ENCODE measurements at regions of chr21 and their contacts with region 1.

Region 1: DNA sequence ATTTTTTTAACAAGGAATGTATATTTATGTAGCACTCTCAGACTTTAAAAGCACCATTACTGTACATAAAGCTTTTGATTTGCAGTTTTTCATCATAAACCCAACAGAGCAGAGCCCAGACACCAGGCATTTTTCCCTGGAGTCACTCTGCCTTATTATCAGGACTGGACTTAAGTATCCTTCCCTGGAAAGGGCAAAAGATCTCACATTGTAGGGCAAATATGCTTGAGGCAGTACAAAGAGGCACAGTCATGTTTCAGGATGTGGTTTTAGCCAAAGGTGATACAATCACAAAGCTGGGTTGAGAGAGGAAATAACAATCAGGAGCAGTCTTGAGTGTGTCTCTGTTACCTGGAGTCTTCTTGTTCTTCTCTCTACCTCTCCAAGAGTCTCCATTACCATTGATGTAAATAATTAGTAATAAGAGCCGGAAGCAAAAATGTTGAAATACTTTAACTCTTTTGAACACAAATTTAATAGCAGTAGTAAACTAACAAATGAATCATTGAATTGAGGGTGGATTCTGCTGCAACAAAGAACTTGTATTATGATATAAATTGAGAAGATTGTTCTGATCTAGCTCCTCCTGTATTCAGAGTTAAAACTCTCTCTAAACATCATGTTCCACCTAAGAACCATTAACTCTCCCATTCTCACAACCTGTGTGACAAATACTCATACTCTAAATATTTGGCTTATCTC is 160.5 kb downstream of the LTN1 start:
- DNase-seq: peak; percentile 33
- H3K4me3 Mint-ChIP-seq: peak overlapping the region; percentile 70
- H3K27ac Mint-ChIP-seq: peak overlapping the region; percentile 88
- H3K4me1 Mint-ChIP-seq: peaks cover 74% of the 10 kb centered on the region
- H3K27me3 Mint-ChIP-seq: peaks cover 2% of the 10 kb centered on the region

Region 2: DNA sequence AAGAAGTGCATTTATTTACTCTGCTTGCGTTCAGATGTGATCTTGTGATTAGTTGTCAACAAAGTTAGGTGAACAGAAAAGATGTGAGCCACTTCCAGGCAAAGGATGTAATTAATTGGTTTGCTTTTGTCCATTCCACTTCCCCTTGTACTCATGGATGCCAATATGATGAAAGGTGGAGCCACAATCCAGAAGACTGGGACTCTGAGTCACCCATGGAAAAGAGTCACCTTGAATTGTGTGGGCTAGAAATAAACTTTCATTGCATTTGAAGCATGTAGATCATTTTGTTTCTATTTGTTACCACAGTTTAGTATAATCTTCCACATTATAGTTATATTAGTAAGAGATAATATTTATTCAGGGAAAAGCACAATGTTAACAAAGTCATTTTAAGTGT is 523.6 kb before region 1 on chr21:
- intact Hi-C with region 1: no loop called
- DNase-seq: no peak
- H3K4me3 Mint-ChIP-seq: no peak overlapping the region
- H3K27ac Mint-ChIP-seq: no peak overlapping the region
- H3K4me1 Mint-ChIP-seq: no peaks in the 10 kb centered on the region
- H3K27me3 Mint-ChIP-seq: no peaks in the 10 kb centered on the region

Region 3: DNA sequence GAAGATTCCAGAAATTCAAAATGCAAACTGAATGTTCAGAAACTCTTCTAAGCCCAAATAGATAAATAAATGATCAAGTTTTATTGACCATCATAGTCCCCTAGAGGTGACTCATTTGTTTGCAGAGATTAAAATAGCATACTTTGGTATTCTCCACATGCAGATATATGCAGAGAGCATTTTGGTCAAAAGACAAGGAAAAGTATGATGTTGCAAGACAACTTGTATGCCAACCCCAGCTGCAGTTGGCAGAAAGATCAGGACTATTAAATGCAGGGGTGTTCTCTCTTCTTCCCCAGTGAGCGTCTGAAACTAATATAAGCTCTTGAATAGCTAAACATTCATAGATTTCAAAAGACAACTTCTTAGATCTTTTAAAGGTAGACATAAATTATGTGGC is 244.4 kb before region 1 on chr21:
- intact Hi-C with region 1: no loop called
- DNase-seq: no peak
- H3K4me3 Mint-ChIP-seq: no peak overlapping the region
- H3K27ac Mint-ChIP-seq: no peak overlapping the region
- H3K4me1 Mint-ChIP-seq: no peaks in the 10 kb centered on the region
- H3K27me3 Mint-ChIP-seq: no peaks in the 10 kb centered on the region

Region 4: GRCh38 chr21:28781602-28782276 is 50.4 kb before region 1 on chr21:
- intact Hi-C with region 1: no loop called
- DNase-seq: no peak
- H3K4me3 Mint-ChIP-seq: no peak overlapping the region
- H3K27ac Mint-ChIP-seq: no peak overlapping the region
- H3K4me1 Mint-ChIP-seq: peaks cover 2% of the 10 kb centered on the region
- H3K27me3 Mint-ChIP-seq: no peaks in the 10 kb centered on the region

Region 5: DNA sequence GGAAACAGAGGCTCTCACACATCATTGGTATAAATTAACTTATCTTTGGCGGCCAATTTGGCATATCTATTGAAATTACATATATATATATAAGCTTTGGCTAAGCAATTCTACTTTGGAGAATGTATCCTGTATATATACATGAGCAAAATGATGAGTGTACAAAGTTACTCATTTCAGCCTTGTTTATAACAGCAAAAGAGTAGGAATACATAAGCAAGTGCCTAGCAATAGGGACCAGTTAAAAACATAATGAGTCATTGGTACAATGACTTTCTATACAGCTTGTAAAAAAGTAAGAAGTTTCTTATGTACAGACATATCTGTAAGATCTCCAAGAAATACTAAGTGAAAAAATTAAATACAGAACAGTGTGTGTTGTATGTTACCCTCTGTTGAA is 30.3 kb before region 1 on chr21:
- intact Hi-C with region 1: loop called (anchors 2 kb)
- DNase-seq: no peak
- H3K4me3 Mint-ChIP-seq: no peak overlapping the region
- H3K27ac Mint-ChIP-seq: no peak overlapping the region
- H3K4me1 Mint-ChIP-seq: peaks cover 5% of the 10 kb centered on the region
- H3K27me3 Mint-ChIP-seq: no peaks in the 10 kb centered on the region

Region 6: DNA sequence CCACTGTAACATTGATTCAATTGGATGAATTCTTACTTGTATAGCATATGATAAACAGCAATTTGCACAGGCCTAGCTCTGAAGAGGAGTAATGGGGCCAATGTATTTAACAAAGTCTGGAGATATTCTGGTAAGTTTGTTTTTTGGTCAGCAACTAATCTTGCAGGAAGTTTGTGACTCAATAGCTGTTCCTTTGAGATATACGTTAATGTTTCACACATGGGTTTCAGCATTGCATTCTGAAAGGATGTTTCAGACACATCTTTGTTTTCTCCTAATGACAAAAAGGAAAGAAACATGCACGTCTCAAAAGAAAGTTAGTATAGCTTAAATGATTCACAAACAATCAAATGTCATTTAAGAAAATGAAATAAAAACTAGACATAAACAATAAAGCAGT is 111.5 kb after region 1 on chr21:
- intact Hi-C with region 1: loop called (anchors 2 kb)
- DNase-seq: no peak
- H3K4me3 Mint-ChIP-seq: no peak overlapping the region
- H3K27ac Mint-ChIP-seq: no peak overlapping the region
- H3K4me1 Mint-ChIP-seq: peaks cover 4% of the 10 kb centered on the region
- H3K27me3 Mint-ChIP-seq: no peaks in the 10 kb centered on the region

Region 7: DNA sequence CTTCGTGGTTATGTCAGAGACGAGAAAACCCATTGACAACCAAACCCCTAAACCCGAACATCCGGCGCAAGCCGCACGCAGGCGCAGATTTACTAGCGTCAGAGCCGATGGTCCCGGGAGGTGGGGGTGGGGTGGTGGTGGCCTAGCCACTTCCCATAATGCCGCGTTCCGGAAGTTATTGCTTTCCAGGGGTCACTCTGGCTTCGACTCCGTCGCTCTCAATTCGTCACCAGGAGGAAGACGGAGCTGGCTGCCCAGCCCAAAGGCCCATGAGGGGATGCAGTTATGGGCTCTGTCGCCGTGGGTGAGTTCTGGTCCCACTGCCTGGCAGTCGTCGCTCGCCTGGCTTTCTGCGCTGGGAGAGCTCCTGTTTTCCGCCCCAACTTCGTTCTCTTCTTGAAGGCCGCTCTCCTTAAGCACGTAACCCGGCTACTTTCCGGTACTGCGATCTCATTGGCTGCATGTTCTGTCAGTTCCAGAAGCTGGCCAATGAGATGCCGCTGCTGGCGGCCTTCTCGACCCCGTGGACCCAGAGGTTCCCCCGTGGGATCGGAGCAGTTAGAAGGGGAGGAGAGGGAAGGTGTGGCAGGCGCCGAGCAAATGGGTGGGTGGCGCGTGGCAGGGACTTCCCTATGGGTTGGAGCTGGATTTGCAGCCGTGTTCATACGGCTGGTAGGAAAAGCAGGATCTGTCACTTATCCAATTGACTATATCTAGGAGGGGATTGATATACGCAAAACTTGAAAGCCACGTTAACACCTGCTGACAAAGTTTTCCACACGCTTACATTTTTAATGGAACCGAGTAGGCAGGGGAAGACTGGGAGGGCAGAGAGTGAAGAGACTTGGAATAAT is 192.5 kb after region 1 on chr21 and contains the start of gene USP16:
- intact Hi-C with region 1: loop called (anchors 10 kb)
- DNase-seq: peak; percentile 95
- H3K4me3 Mint-ChIP-seq: peak within 1 kb of the TSS; percentile 99
- H3K27ac Mint-ChIP-seq: peak within 1 kb of the TSS; percentile 97
- H3K4me1 Mint-ChIP-seq: peaks cover 39% of the 10 kb centered on the region
- H3K27me3 Mint-ChIP-seq: no peaks in the 10 kb centered on the region
- total RNA-seq, gene USP16: 44.7 and 48.7 TPM in 2 replicates

Measured in activated T-helper 1 cell treated with anti-CD3 and anti-CD28 coated beads, Interleukin-12 subunit alpha, Interleukin-12 subunit beta, Interleukin-2, Interleukin-4 antibody, amounts not matched to agents 30 ng/mL and 10 ng/mL and 1 ng/mL, durations not matched to agents 14 hours and 24 hours and 36 hours (primary cell).